ENCODE measurements at regions of chr13 and their contacts with region 1.

Region 1: DNA sequence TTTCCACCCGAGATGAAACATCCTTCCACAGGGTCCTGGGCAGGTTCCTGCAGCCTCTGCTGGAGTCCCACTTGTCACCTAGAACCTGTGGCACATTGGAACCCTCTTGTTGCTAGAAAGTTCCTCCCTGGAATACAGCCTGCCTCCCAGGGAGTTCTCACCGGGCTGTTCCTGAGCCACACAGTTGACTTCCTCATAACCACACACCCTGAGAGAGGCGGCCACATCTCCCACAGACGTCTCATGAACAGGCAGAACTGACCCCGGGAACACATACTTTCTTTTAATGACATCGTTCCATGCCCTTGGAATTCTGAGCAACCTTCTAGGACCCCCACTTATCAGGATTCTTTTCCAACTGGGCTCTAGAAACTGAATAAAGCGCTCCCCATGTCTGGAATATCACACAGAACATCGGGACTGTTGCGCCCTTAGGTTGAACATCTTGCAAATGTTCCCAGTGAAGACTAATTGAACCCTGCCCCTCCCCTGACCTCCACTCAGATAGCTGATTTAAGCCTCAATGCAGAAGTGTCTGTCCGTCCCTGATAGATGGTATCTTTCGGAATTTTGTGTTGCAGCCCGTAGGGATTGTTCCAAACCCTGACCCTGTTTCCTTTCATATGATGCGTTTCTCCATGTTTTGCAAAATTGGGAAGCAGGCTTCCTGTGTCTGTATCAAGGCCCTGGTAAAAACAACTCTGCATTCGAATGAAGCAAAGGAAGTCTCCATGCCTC is 91.1 kb downstream of the RAB20 start:
- DNase-seq: no peak
- H3K4me3 ChIP-seq: no peak overlapping the region
- H3K27me3 ChIP-seq: no peaks in the 10 kb centered on the region
- CTCF ChIP-seq: no peak

Region 2: GRCh38 chr13:110233181-110233950 is 237.1 kb before region 1 on chr13:
- CTCF ChIA-PET with region 1: no interaction called
- POLR2A ChIA-PET with region 1: no interaction called
- DNase-seq: peak; percentile 72
- H3K4me3 ChIP-seq: peak overlapping the region; percentile 19; the same call in 1 of the 2 replicates
- H3K27me3 ChIP-seq: no peaks in the 10 kb centered on the region
- CTCF ChIP-seq: no peak

Region 3: GRCh38 chr13:110960204-110960603 is 489.8 kb after region 1 on chr13:
- CTCF ChIA-PET with region 1: no interaction called
- POLR2A ChIA-PET with region 1: interaction called, 15 read pairs
- DNase-seq: no peak
- H3K4me3 ChIP-seq: no peak overlapping the region
- H3K27me3 ChIP-seq: no peaks in the 10 kb centered on the region
- CTCF ChIP-seq: no peak

Measured in BJ (cell line).